T-cell (primary cell): ENCODE measurements at regions of chr1 and their contacts with region 1.

Region 1: GRCh38 chr1:246398126-246398820 is 108.8 kb downstream of the SMYD3 start:
- DNase-seq: no peak
- ATAC-seq: no peak
- H3K4me3 ChIP-seq: no peak overlapping the region
- H3K4me3 Mint-ChIP-seq: no peak overlapping the region
- H3K27ac ChIP-seq: no peak overlapping the region
- H3K27ac Mint-ChIP-seq: no peak overlapping the region
- H3K4me1 ChIP-seq: no peaks in the 10 kb centered on the region
- H3K4me1 Mint-ChIP-seq: no peaks in the 10 kb centered on the region
- H3K27me3 ChIP-seq: no peaks in the 10 kb centered on the region
- H3K27me3 Mint-ChIP-seq: no peaks in the 10 kb centered on the region

Region 2: DNA sequence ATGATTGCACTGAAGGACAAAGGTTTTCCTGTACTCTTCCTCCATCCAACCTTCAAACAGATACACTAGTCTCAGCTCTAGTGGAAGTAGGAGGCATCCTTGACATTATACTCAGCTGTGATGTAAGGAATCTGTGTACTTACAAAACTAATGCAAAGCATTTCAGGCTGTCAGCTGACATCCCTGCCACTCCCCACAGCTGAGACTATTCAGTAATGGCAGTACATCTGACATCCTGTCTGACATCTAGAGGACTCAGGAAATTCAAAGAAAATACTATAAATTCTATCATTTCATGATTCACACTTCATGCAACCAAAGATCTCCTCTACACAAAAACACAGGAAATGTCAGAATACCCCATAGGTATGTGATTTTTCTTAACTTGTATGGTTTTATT is 217.0 kb before region 1 on chr1:
- CTCF ChIA-PET with region 1: no interaction called
- POLR2A ChIA-PET with region 1: no interaction called
- DNase-seq: no peak
- ATAC-seq: no peak
- H3K4me3 ChIP-seq: no peak overlapping the region
- H3K4me3 Mint-ChIP-seq: no peak overlapping the region
- H3K27ac ChIP-seq: no peak overlapping the region
- H3K27ac Mint-ChIP-seq: no peak overlapping the region
- H3K4me1 ChIP-seq: peaks cover 0 to 2% of the 10 kb centered on the region in 2 experiments
- H3K4me1 Mint-ChIP-seq: peaks cover 0 to 10% (median 0%) of the 10 kb centered on the region in 3 donors
- H3K27me3 ChIP-seq: no peaks in the 10 kb centered on the region
- H3K27me3 Mint-ChIP-seq: no peaks in the 10 kb centered on the region

Region 3: DNA sequence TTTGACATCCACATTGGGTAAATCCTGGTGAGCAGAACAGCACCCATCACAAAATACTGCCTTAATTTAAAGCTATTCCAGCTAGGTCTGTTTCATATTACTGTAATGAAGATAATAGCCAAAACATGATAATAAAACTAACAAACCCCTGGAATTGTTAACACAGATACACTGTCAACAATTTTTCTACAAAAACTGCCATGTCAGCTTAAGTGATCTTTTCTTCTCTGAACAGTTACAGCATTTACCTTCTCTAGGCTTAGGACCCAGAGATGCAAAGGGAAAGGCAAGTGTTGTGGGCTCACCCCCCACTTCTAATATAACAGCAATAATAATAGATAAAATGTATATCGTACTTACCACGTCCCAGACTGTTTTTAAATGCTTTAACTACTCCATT is 16.8 kb after region 1 on chr1:
- CTCF ChIA-PET with region 1: no interaction called
- POLR2A ChIA-PET with region 1: interaction called, 5 to 10 read pairs
- DNase-seq: no peak
- ATAC-seq: no peak
- H3K4me3 ChIP-seq: no peak overlapping the region
- H3K4me3 Mint-ChIP-seq: no peak overlapping the region
- H3K27ac ChIP-seq: no peak overlapping the region
- H3K27ac Mint-ChIP-seq: no peak overlapping the region
- H3K4me1 ChIP-seq: no peaks in the 10 kb centered on the region
- H3K4me1 Mint-ChIP-seq: no peaks in the 10 kb centered on the region
- H3K27me3 ChIP-seq: no peaks in the 10 kb centered on the region
- H3K27me3 Mint-ChIP-seq: no peaks in the 10 kb centered on the region